ENCODE measurements at regions of chr6 and their contacts with region 1.

Region 1: GRCh38 chr6:137811121-137811915 is 55.7 kb upstream of the TNFAIP3 start:
- DNase-seq: peak; percentile 53
- ATAC-seq: peak; percentile 99
- H3K4me3 Mint-ChIP-seq: peak overlapping the region; percentile 69
- H3K27ac Mint-ChIP-seq: peak overlapping the region; percentile 95
- H3K4me1 Mint-ChIP-seq: peaks cover 41% of the 10 kb centered on the region
- H3K27me3 Mint-ChIP-seq: no peaks in the 10 kb centered on the region
- CTCF ChIP-seq: no peak

Region 2: DNA sequence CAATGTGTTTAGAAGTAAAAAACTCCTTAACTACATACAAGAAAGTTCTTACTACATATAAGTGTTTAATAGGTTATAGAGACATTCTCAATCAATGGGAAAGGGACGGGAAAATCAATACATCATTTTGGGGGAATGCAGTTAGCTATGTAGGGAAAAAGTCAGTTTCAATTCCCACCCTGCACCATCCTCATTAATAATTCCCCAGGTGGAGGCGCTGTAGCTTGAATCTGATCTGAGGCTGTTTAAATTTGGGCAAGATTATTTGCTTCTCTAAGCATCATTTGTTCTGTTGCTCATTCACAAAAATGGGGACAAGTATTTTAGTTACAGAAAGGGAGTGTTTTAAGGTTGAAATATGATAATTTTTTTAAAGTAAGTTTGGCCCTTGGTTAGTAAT is 336.2 kb before region 1 on chr6:
- CTCF ChIA-PET with region 1: no interaction called
- POLR2A ChIA-PET with region 1: no interaction called
- intact Hi-C with region 1: no loop called
- DNase-seq: no peak
- ATAC-seq: no peak
- H3K4me3 Mint-ChIP-seq: no peak overlapping the region
- H3K27ac Mint-ChIP-seq: no peak overlapping the region
- H3K4me1 Mint-ChIP-seq: no peaks in the 10 kb centered on the region
- H3K27me3 Mint-ChIP-seq: peaks cover 34% of the 10 kb centered on the region
- CTCF ChIP-seq: no peak

Region 3: GRCh38 chr6:137791281-137792159 is 19.8 kb before region 1 on chr6:
- CTCF ChIA-PET with region 1: no interaction called
- POLR2A ChIA-PET with region 1: no interaction called
- intact Hi-C with region 1: loop called (anchors 1 kb)
- DNase-seq: no peak
- ATAC-seq: no peak
- H3K4me3 Mint-ChIP-seq: no peak overlapping the region
- H3K27ac Mint-ChIP-seq: peak overlapping the region; percentile 68
- H3K4me1 Mint-ChIP-seq: peaks cover 42% of the 10 kb centered on the region
- H3K27me3 Mint-ChIP-seq: no peaks in the 10 kb centered on the region
- CTCF ChIP-seq: no peak

Region 4: GRCh38 chr6:137823826-137824555 is 12.7 kb after region 1 on chr6:
- CTCF ChIA-PET with region 1: interaction called, 5 read pairs
- POLR2A ChIA-PET with region 1: interaction called, 17 read pairs
- intact Hi-C with region 1: loop called (anchors 1 kb)
- DNase-seq: no peak
- ATAC-seq: peak; percentile 33
- H3K4me3 Mint-ChIP-seq: peak overlapping the region; percentile 46
- H3K27ac Mint-ChIP-seq: peak overlapping the region; percentile 77
- H3K4me1 Mint-ChIP-seq: peaks cover 67% of the 10 kb centered on the region
- H3K27me3 Mint-ChIP-seq: no peaks in the 10 kb centered on the region
- CTCF ChIP-seq: no peak

Region 5: GRCh38 chr6:137846772-137847313 is 35.5 kb after region 1 on chr6:
- CTCF ChIA-PET with region 1: no interaction called
- POLR2A ChIA-PET with region 1: interaction called, 8 read pairs
- intact Hi-C with region 1: loop called (anchors 2 kb)
- DNase-seq: peak; percentile 27
- ATAC-seq: peak; percentile 90
- H3K4me3 Mint-ChIP-seq: no peak overlapping the region
- H3K27ac Mint-ChIP-seq: no peak overlapping the region
- H3K4me1 Mint-ChIP-seq: peaks cover 10% of the 10 kb centered on the region
- H3K27me3 Mint-ChIP-seq: no peaks in the 10 kb centered on the region
- CTCF ChIP-seq: no peak

Region 6: GRCh38 chr6:137903933-137904821 is 92.9 kb after region 1 on chr6:
- CTCF ChIA-PET with region 1: no interaction called
- POLR2A ChIA-PET with region 1: no interaction called
- intact Hi-C with region 1: no loop called
- DNase-seq: no peak
- ATAC-seq: peak; percentile 84
- H3K4me3 Mint-ChIP-seq: peak overlapping the region; percentile 59
- H3K27ac Mint-ChIP-seq: peak overlapping the region; percentile 79
- H3K4me1 Mint-ChIP-seq: peaks cover 43% of the 10 kb centered on the region
- H3K27me3 Mint-ChIP-seq: no peaks in the 10 kb centered on the region
- CTCF ChIP-seq: no peak